Heart left ventricle (tissue), 16 donors: ENCODE measurements at regions of chr7 and their contacts with region 1.

Region 1: GRCh38 chr7:127557803-127558202 is 27.6 kb downstream of the GCC1 start:
- DNase-seq: no peak
- ATAC-seq: no peak
- H3K4me3 ChIP-seq: no peak overlapping the region
- H3K27ac ChIP-seq: no peak overlapping the region
- H3K4me1 ChIP-seq: no peaks in the 10 kb centered on the region
- H3K27me3 ChIP-seq: no peaks in the 10 kb centered on the region
- CTCF ChIP-seq: peak in 5 of 12 donors; percentile 5 to 27 (median 17)
- POLR2A ChIP-seq: no peak

Region 2: GRCh38 chr7:127440206-127440605 is 117.6 kb before region 1 on chr7:
- intact Hi-C with region 1: loop called in 1 of 10 experiments (anchors 5 kb)
- DNase-seq: no peak
- ATAC-seq: no peak
- H3K4me3 ChIP-seq: no peak overlapping the region
- H3K27ac ChIP-seq: no peak overlapping the region
- H3K4me1 ChIP-seq: no peaks in the 10 kb centered on the region
- H3K27me3 ChIP-seq: peaks cover 0 to 11% (median 0%) of the 10 kb centered on the region in 9 donors
- CTCF ChIP-seq: no peak
- POLR2A ChIP-seq: no peak

Region 3: GRCh38 chr7:127609297-127609696 is 51.5 kb after region 1 on chr7:
- intact Hi-C with region 1: no loop called
- DNase-seq: no peak
- ATAC-seq: no peak
- H3K4me3 ChIP-seq: no peak overlapping the region
- H3K27ac ChIP-seq: no peak overlapping the region
- H3K4me1 ChIP-seq: no peaks in the 10 kb centered on the region
- H3K27me3 ChIP-seq: peaks cover 0 to 13% (median 0%) of the 10 kb centered on the region in 9 donors
- CTCF ChIP-seq: no peak
- POLR2A ChIP-seq: no peak

Region 4: DNA sequence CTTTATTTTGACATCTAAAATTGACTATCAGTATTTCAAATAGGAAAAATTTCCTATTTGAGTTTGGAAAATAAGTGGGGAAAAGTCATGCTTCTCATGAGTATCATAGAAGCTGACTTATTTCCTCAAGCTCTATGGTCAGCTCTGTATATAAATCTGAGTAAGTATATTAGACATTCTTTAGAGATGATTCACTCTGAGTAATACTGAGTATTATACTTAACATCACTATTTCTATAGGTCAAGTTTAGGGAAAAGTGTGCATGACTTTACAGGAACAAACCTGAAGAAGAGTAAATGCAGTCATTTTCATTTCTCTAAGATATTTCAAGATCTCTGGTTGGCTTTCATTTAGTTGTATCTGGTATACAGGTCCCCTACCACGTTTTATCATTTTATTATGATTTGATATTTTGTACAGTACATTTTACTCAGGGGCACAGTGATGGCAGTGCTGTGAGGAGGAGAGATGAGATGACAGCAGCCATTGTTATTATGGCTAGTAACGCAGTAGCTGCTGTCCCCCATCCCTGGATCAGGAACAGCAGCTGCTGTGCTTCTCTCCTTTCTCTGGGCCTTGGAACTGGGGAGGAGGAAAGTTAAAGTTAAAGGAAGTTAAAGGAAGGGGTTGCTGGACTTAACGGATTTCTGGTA is 109.3 kb after region 1 on chr7:
- intact Hi-C with region 1: no loop called
- DNase-seq: no peak
- ATAC-seq: no peak
- H3K4me3 ChIP-seq: no peak overlapping the region
- H3K27ac ChIP-seq: peak overlapping the region in 1 of 12 donors; percentile 50
- H3K4me1 ChIP-seq: peaks cover 0 to 34% (median 0%) of the 10 kb centered on the region in 12 donors
- H3K27me3 ChIP-seq: no peaks in the 10 kb centered on the region
- CTCF ChIP-seq: no peak
- POLR2A ChIP-seq: no peak

Region 5: GRCh38 chr7:127751490-127752448 is 194.0 kb after region 1 on chr7:
- intact Hi-C with region 1: no loop called
- DNase-seq: no peak
- ATAC-seq: peak in 1 of 4 donors; percentile 29
- H3K4me3 ChIP-seq: no peak overlapping the region
- H3K27ac ChIP-seq: no peak overlapping the region
- H3K4me1 ChIP-seq: peaks cover 0 to 22% (median 2%) of the 10 kb centered on the region in 12 donors
- H3K27me3 ChIP-seq: no peaks in the 10 kb centered on the region
- CTCF ChIP-seq: no peak
- POLR2A ChIP-seq: no peak